ENCODE measurements at regions of chrX and their contacts with region 1.

Region 1: GRCh38 chrX:77910108-77910840 is at the start of gene ATP7A:
- DNase-seq: peak; percentile 92
- H3K4me3 ChIP-seq: peak within 1 kb of the TSS; percentile 75
- H3K27ac ChIP-seq: peak within 1 kb of the TSS; percentile 60
- H3K4me1 ChIP-seq: peaks cover 22% of the 10 kb centered on the region
- CTCF ChIP-seq: peak; percentile 64
- total RNA-seq, gene ATP7A: 3.6 and 4.7 TPM in 2 replicates

Region 2: DNA sequence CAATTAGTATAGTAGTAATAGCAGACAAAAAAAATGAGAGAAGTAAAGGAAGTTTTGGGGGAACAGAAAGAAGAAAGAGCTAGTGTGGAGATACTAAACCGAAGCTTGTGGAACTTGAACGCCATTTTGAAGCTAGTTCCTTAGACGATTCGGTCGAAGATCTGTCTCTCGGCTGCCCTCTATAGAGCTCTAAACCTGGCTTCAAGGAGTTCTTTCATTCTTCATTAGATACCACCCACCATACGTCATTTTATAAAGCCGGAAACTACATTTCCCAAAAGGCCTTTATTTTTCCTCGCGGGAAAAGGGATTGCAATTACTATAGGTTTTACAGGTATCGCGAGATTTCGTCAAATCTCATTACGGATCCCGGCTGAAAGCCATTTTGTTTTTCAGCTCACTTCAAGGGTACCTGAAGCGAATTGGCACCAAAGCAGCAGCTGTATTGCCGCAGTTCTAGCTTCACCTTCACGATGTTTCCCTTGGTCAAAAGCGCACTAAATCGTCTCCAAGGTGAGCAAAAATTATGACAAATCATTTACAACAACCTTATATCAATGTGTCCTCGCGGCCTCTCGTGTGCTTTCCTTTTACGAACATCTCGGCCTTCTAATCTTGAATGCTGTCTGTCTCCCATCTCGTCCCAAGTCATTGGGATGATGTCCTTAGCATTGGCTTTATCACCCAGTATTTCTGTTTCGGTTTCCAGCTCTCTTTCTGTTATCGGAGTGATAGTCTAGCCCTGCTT is 11.0 kb before region 1 on chrX and contains the start of gene COX7B:
- CTCF ChIA-PET with region 1: no interaction called
- POLR2A ChIA-PET with region 1: interaction called, 35 read pairs
- intact Hi-C with region 1: no loop called
- DNase-seq: peak; percentile 96
- H3K4me3 ChIP-seq: peak within 1 kb of the TSS; percentile 91
- H3K27ac ChIP-seq: peak within 1 kb of the TSS; percentile 82
- H3K4me1 ChIP-seq: no peaks in the 10 kb centered on the region
- CTCF ChIP-seq: peak; percentile 70
- total RNA-seq, gene COX7B: 189 and 199 TPM in 2 replicates

Region 3: DNA sequence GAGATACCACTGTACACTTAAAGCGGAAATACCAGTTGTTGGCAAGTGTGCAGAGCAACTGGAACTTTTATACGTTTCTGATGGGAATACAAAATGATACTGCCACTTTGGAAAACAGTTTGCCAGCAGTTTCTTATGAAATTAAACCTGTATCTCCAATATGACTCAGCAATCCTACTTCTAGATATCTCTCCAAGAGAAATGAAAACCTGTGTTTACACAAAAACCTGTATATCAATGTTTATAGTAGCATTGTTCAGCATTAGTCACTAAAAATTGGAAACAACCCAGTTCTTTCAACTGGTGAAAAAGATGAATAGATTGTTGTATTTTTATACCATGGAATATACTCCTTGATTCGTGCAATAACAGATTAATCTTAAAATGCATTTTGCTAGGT is 27.0 kb after region 1 on chrX:
- CTCF ChIA-PET with region 1: no interaction called
- POLR2A ChIA-PET with region 1: no interaction called
- intact Hi-C with region 1: no loop called
- DNase-seq: no peak
- H3K4me3 ChIP-seq: no peak overlapping the region
- H3K27ac ChIP-seq: no peak overlapping the region
- H3K4me1 ChIP-seq: peaks cover 2% of the 10 kb centered on the region
- CTCF ChIP-seq: no peak

Region 4: DNA sequence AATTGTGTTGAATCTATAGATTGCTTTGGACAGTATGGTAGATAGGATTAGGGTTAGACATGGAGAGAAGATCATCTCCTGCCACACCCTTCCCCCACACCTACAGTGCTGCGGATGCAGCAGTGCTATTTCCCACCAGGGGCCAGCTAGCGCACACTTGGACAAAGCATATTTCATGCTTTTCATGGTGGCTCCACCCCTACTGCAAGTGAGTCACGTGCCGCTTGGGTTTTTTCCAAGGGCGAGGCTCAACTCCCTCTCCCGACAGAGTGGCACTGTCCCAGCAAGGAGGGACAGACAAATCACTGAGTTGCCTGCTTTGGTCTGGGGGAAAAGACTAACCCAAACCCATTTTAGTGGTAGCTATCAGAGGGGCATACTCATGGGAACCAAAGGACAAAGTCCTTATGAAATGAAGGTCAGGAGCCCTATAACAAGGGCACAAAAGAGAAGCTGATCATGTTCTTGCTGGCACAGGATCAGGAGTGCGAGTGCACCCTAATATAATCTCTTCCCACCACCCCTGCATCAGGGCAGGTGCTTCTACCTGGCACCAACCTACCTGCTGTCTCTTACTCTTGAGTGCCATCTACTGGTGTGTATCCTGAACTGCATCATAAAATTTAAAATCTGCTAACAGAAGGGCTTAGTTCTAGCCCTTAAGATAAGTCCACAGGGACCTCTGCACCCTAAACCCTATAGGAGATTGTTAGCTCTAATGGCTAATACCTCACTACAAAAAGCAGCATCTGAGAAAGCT is 114.3 kb after region 1 on chrX:
- CTCF ChIA-PET with region 1: interaction called, 5 read pairs
- POLR2A ChIA-PET with region 1: interaction called, 5 read pairs
- intact Hi-C with region 1: loop called (anchors 1 kb)
- DNase-seq: peak; percentile 25
- H3K4me3 ChIP-seq: no peak overlapping the region
- H3K27ac ChIP-seq: no peak overlapping the region
- H3K4me1 ChIP-seq: no peaks in the 10 kb centered on the region
- CTCF ChIP-seq: peak; percentile 80

Region 5: DNA sequence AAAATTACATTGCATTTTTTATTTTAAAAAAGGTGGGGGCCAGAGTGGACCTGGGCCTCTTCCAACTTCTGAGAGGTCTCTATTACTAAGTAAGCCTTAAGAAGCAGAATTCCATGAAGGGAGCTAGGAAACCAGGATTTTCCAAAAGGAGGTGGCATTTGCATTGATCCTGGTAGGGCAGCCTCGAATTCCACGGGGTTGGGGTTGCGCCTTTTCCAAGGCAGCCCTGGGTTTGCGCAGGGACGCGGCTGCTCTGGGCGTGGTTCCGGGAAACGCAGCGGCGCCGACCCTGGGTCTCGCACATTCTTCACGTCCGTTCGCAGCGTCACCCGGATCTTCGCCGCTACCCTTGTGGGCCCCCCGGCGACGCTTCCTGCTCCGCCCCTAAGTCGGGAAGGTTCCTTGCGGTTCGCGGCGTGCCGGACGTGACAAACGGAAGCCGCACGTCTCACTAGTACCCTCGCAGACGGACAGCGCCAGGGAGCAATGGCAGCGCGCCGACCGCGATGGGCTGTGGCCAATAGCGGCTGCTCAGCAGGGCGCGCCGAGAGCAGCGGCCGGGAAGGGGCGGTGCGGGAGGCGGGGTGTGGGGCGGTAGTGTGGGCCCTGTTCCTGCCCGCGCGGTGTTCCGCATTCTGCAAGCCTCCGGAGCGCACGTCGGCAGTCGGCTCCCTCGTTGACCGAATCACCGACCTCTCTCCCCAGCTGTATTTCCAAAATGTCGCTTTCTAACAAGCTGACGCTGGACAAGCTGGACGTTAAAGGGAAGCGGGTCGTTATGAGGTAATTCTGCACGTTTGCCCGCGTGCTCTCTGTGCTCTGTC is 193.6 kb after region 1 on chrX and contains the start of gene PGK1:
- CTCF ChIA-PET with region 1: no interaction called
- POLR2A ChIA-PET with region 1: no interaction called
- intact Hi-C with region 1: loop called (anchors 5 kb)
- DNase-seq: peak; percentile 95
- H3K4me3 ChIP-seq: peak within 1 kb of the TSS; percentile 100
- H3K27ac ChIP-seq: peak within 1 kb of the TSS; percentile 82
- H3K4me1 ChIP-seq: peaks cover 50% of the 10 kb centered on the region
- CTCF ChIP-seq: no peak
- total RNA-seq, gene PGK1: 164 and 179 TPM in 2 replicates

Region 6: DNA sequence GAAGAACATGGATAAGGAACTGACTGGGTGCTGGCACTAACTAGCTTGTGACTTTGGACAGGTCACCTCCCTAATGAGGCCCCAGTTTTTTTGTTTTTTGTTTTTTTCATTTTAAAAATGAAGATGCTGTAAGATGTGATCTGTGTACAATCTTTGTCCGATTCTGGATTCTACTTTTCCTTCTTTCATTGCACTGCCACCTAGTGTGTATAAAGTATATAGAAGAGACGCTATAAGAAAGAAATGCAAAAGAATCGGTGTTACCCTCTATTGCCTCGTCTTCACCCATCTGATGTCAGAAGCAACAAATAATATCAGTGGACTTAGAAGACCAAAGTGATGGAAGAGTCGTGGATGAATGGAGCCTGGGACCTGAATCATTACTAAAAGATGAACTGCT is 976.3 kb after region 1 on chrX:
- CTCF ChIA-PET with region 1: no interaction called
- POLR2A ChIA-PET with region 1: no interaction called
- intact Hi-C with region 1: no loop called
- DNase-seq: peak; percentile 11
- H3K4me3 ChIP-seq: no peak overlapping the region
- H3K27ac ChIP-seq: no peak overlapping the region
- H3K4me1 ChIP-seq: no peaks in the 10 kb centered on the region
- CTCF ChIP-seq: peak; percentile 63

Region 7: DNA sequence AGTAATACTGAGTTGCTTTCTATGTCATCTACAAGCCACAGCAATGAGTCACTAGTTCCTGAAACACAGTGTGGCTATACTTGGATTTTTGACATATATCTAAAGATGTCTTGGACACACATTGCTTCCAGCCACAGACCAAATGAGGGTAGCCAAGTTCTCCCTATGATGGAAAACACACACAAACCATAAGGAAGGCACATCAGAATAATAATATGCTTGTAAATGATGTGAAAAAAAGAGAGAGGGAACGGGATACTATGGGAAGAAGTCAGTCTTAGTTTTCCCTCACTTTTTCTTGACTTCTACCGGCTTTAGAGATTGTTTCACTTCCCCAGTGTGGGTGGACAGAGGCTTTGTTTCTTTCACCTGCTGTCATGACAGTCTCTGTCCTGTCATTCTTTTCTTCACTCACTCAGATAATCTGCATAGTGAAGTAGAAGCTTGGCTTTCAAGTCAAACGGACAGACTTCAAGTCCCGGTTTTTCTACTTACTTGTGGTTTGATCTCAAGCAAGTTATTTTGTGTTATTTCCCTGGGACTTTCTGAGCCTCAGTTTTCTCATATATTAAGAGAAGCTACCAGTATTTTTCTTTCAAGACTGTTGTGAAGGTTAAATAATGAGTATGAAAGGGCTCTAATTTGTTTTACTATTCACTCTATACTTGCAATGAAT is 1069.7 kb after region 1 on chrX:
- CTCF ChIA-PET with region 1: no interaction called
- POLR2A ChIA-PET with region 1: interaction called, 11 read pairs
- intact Hi-C with region 1: no loop called
- DNase-seq: peak; percentile 8
- H3K4me3 ChIP-seq: no peak overlapping the region
- H3K27ac ChIP-seq: no peak overlapping the region
- H3K4me1 ChIP-seq: no peaks in the 10 kb centered on the region
- CTCF ChIP-seq: no peak